ENCODE measurements at regions of chr10 and their contacts with region 1.

Region 1: GRCh38 chr10:15719899-15720634 is at the start of gene ITGA8:
- DNase-seq: peak; percentile 43
- ATAC-seq: peak; percentile 70
- total RNA-seq, gene ITGA8: 1.1 TPM

Region 2: DNA sequence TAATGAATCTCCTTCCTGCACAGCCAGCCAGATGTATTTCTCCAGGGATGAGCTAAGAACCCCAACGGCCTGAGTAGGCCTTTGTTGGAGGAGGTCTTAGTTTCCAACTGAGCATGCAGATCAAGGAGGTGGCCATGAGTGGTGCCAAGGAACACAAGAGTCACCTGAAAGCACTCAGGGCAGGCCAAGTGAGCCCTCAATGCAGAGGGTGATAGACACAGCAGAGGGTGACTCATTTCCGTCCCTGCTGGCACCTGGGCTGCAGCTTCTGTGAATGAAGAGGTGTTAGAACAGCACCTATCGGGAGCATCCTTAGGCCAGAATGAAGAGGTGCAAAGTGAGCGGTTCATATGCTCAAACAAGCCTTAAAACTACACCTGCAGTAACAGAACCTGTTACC is 1601.1 kb before region 1 on chr10:
- intact Hi-C with region 1: no loop called
- DNase-seq: no peak
- ATAC-seq: no peak

Region 3: GRCh38 chr10:15433850-15434537 is 286.1 kb before region 1 on chr10:
- intact Hi-C with region 1: loop called (anchors 5 kb)
- DNase-seq: no peak
- ATAC-seq: peak; percentile 89

Region 4: GRCh38 chr10:15585303-15585715 is 134.8 kb before region 1 on chr10:
- intact Hi-C with region 1: loop called (anchors 10 kb)
- DNase-seq: peak; percentile 53
- ATAC-seq: peak; percentile 64

Measured in Right ventricle myocardium superior (tissue), 1 donor.